ENCODE measurements at regions of chr12 and their contacts with region 1.

Region 1: GRCh38 chr12:92363295-92364146 is 217.9 kb upstream of the BTG1 start:
- DNase-seq: peak; percentile 20 to 79 (median 51)
- ATAC-seq: peak; percentile 55
- H3K4me3 ChIP-seq: peak overlapping the region; percentile 43
- H3K4me3 Mint-ChIP-seq: peak overlapping the region; percentile 74
- H3K27ac ChIP-seq: peak overlapping the region; percentile 73 to 79
- H3K27ac Mint-ChIP-seq: peak overlapping the region; percentile 90
- H3K4me1 ChIP-seq: peaks cover 29% of the 10 kb centered on the region
- H3K4me1 Mint-ChIP-seq: peaks cover 76% of the 10 kb centered on the region
- H3K27me3 ChIP-seq: no peaks in the 10 kb centered on the region
- H3K27me3 Mint-ChIP-seq: no peaks in the 10 kb centered on the region
- CTCF ChIP-seq: no peak

Region 2: GRCh38 chr12:91991399-91992187 is 371.9 kb before region 1 on chr12:
- CTCF ChIA-PET with region 1: no interaction called
- POLR2A ChIA-PET with region 1: no interaction called
- intact Hi-C with region 1: no loop called
- DNase-seq: peak in 3 of 14 experiments; percentile 72 to 79 (median 76)
- ATAC-seq: peak; percentile 89
- H3K4me3 ChIP-seq: no peak overlapping the region
- H3K4me3 Mint-ChIP-seq: peak overlapping the region; percentile 6
- H3K27ac ChIP-seq: no peak overlapping the region
- H3K27ac Mint-ChIP-seq: peak overlapping the region; percentile 59
- H3K4me1 ChIP-seq: peaks cover 3% of the 10 kb centered on the region
- H3K4me1 Mint-ChIP-seq: peaks cover 75% of the 10 kb centered on the region
- H3K27me3 ChIP-seq: no peaks in the 10 kb centered on the region
- H3K27me3 Mint-ChIP-seq: no peaks in the 10 kb centered on the region
- CTCF ChIP-seq: peak; percentile 58

Region 3: DNA sequence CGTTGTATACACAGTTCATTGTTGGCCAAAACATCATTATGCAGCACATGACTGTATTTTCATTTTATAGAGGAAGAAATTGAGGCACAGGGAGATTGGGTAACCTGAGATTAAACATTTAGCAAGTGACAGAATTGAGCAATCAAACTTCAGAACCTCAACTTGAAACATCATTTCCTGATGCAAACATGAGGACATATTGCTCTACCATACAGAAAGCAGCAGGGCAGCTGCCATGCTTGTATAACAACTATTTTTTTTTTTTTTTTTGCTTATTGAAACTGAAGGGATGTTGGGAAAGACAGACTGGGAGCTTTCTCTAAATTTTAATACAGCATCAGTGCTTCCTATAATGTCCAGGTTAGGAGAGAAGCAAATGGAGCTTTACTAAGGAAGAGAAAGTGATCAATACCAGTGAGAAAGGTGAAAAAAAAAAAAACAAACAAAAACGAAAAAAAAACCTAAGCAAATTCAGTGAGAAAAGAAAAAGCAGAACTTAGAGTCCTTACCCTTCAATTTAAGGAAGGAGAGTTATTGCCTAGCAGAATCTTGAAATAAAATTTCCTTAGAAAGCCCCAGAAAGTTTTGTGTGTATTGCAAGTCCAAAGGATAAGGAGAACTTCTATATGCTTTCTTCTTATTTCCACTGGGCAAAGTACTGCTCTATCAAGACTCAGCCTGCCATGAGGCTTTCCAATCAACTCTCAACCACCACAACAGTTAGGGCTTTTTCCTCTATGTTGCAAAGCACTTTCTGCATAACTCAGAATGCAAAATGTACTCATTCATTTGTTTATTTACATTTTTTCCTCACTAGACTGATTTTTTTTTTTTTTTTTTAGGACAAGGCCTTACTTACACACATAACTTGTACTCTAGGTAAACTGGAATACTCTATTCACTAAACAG is 239.5 kb before region 1 on chr12:
- CTCF ChIA-PET with region 1: no interaction called
- POLR2A ChIA-PET with region 1: no interaction called
- intact Hi-C with region 1: no loop called
- DNase-seq: no peak
- ATAC-seq: peak; percentile 13
- H3K4me3 ChIP-seq: no peak overlapping the region
- H3K4me3 Mint-ChIP-seq: peak overlapping the region; percentile 43
- H3K27ac ChIP-seq: no peak overlapping the region
- H3K27ac Mint-ChIP-seq: peak overlapping the region; percentile 76
- H3K4me1 ChIP-seq: peaks cover 18% of the 10 kb centered on the region
- H3K4me1 Mint-ChIP-seq: peaks cover 72% of the 10 kb centered on the region
- H3K27me3 ChIP-seq: no peaks in the 10 kb centered on the region
- H3K27me3 Mint-ChIP-seq: no peaks in the 10 kb centered on the region
- CTCF ChIP-seq: no peak

Region 4: DNA sequence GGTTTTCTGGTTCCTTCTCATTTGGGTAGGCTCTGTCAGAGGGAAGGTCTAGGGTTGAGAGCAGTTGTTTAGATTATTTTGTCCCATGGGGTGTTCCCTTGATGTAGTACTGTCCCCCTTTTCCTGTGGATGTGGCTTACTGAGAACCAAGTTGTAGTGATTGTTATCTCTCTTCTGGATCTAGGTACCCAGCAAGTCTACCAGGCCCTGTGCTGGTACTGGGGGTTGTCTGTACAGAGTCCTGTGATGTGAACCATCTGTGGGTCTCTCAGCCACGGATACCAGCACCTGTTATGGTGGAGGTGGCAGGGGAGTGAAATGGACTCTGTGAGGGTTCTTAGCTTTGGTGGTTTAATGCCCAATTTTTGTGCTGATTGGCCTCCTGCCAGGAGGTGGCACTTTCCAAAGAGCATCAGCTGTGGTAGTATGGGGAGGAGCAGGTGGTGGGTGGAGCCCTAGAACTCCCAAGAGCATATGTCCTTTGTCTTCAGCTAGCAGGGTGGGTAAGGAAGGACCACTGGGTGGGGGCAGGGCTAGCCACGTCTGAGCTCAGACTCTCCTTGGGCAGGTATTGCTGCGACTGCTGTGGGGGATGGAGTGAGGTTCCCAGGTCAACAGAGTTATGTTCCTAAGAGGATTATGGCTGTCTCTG is 38.5 kb before region 1 on chr12:
- CTCF ChIA-PET with region 1: no interaction called
- POLR2A ChIA-PET with region 1: no interaction called
- intact Hi-C with region 1: loop called in 1 of 2 experiments (anchors 5 kb)
- DNase-seq: no peak
- ATAC-seq: no peak
- H3K4me3 ChIP-seq: no peak overlapping the region
- H3K4me3 Mint-ChIP-seq: no peak overlapping the region
- H3K27ac ChIP-seq: no peak overlapping the region
- H3K27ac Mint-ChIP-seq: no peak overlapping the region
- H3K4me1 ChIP-seq: peaks cover 13% of the 10 kb centered on the region
- H3K4me1 Mint-ChIP-seq: peaks cover 48% of the 10 kb centered on the region
- H3K27me3 ChIP-seq: no peaks in the 10 kb centered on the region
- H3K27me3 Mint-ChIP-seq: no peaks in the 10 kb centered on the region
- CTCF ChIP-seq: no peak

Region 5: GRCh38 chr12:92378682-92379479 is 15.4 kb after region 1 on chr12:
- CTCF ChIA-PET with region 1: interaction called, 3 read pairs
- POLR2A ChIA-PET with region 1: interaction called, 22 read pairs
- intact Hi-C with region 1: loop called in 1 of 2 experiments (anchors 2 kb)
- DNase-seq: peak in 6 of 14 experiments; percentile 21 to 62 (median 48)
- ATAC-seq: peak; percentile 93
- H3K4me3 ChIP-seq: no peak overlapping the region
- H3K4me3 Mint-ChIP-seq: peak overlapping the region; percentile 14
- H3K27ac ChIP-seq: peak overlapping the region; percentile 26 to 66
- H3K27ac Mint-ChIP-seq: peak overlapping the region; percentile 84
- H3K4me1 ChIP-seq: peaks cover 26% of the 10 kb centered on the region
- H3K4me1 Mint-ChIP-seq: peaks cover 84% of the 10 kb centered on the region
- H3K27me3 ChIP-seq: no peaks in the 10 kb centered on the region
- H3K27me3 Mint-ChIP-seq: no peaks in the 10 kb centered on the region
- CTCF ChIP-seq: no peak

Region 6: DNA sequence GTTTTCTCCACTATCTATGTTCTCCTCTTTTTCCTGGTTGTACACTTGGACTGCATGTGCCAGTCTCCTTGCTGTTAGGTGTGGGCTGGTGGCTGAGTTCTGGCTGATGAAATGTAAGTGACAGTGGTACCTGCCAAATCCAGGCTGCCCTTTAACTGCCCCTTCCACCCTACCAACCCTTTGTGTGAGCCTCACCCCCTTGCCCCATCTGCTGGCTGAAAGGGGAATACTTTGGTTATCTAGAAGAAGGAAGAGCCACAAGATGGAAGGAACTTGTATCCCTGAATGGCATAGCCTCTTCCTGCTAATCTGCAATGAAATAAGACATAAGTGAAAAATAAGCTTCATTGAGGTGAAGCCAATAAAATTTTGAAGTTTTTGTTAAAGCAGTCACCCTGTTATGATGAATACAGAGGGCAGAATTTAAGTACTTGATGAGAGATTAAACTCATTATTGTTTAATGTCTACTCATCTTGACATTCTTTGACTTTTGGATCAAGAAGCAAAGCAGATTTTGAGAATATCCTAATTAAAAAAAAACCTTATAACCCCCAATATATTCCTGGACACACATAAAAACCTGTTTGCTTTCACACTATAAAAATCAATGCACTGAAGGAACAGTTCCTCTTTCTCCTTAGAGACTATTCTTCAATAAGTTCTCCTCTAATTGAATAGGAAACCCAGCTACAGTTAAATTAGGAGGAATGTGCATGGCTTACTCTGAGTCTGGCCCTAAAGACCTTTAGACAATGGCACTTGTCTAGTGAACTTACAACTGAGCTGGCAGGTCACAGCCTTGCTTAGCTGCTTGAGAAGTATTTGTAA is 44.8 kb after region 1 on chr12:
- CTCF ChIA-PET with region 1: interaction called, 4 read pairs
- POLR2A ChIA-PET with region 1: interaction called, 15 read pairs
- intact Hi-C with region 1: no loop called
- DNase-seq: peak in 7 of 14 experiments; percentile 21 to 76 (median 59)
- ATAC-seq: no peak
- H3K4me3 ChIP-seq: no peak overlapping the region
- H3K4me3 Mint-ChIP-seq: peak overlapping the region; percentile 9
- H3K27ac ChIP-seq: no peak overlapping the region
- H3K27ac Mint-ChIP-seq: peak overlapping the region; percentile 40
- H3K4me1 ChIP-seq: peaks cover 43% of the 10 kb centered on the region
- H3K4me1 Mint-ChIP-seq: peaks cover 73% of the 10 kb centered on the region
- H3K27me3 ChIP-seq: no peaks in the 10 kb centered on the region
- H3K27me3 Mint-ChIP-seq: no peaks in the 10 kb centered on the region
- CTCF ChIP-seq: no peak

Measured in CD4-positive, alpha-beta T cell (primary cell).